Astrocyte of the cerebellum (primary cell): ENCODE measurements at regions of chr20 and their contacts with region 1.

Region 1: GRCh38 chr20:47677635-47678453 is 107.4 kb downstream of the SULF2 start:
- DNase-seq: no peak
- H3K4me3 ChIP-seq: no peak overlapping the region
- CTCF ChIP-seq: peak; percentile 84

Region 2: DNA sequence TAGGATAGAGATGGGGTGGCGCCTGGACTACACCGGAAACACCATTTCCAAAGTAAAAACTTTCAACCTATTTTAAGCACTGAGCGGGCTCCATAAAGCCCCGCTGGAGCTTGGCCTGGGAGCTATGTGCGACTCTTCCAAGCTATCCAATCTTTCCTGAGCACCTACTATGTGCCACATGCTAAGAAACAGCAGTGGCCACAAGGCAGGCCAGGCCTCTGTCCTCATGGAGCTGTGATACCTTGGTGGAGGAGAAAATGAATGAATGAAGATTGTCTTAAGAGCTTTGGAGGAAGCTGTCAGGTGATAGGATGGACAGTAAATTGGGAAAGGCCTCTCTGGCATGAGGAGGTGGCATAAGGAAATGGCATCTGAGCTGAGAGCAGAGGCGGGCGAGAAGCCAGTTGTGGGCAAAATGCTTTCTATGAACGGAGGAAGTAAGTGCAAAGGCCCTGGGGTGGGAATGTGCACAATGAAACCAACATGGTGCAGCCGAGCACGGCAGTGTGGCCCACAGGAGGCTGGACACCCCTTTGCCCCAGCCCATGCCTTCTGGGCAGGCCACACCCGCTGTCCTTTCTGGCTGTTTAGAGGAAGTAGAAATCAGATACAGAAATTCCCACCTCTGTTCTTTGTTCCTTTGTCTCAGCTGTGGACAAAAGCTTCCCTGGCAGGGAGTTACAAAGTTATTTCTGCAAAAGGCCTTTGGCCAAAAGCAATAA is 95.3 kb after region 1 on chr20:
- in situ Hi-C with region 1: loop called (anchors 10 kb)
- DNase-seq: no peak
- H3K4me3 ChIP-seq: no peak overlapping the region
- CTCF ChIP-seq: no peak

Region 3: GRCh38 chr20:48295445-48295963 is 617.7 kb after region 1 on chr20:
- in situ Hi-C with region 1: loop called (anchors 10 kb)
- DNase-seq: peak; percentile 91
- H3K4me3 ChIP-seq: no peak overlapping the region
- CTCF ChIP-seq: peak; percentile 56

Region 4: GRCh38 chr20:48620519-48621254 is 942.8 kb after region 1 on chr20:
- in situ Hi-C with region 1: loop called (anchors 5 kb)
- DNase-seq: peak; percentile 64
- H3K4me3 ChIP-seq: peak overlapping the region; percentile 17
- CTCF ChIP-seq: peak; percentile 95